Thyroid gland (tissue), 4 donors: ENCODE measurements at regions of chr17 and their contacts with region 1.

Region 1: DNA sequence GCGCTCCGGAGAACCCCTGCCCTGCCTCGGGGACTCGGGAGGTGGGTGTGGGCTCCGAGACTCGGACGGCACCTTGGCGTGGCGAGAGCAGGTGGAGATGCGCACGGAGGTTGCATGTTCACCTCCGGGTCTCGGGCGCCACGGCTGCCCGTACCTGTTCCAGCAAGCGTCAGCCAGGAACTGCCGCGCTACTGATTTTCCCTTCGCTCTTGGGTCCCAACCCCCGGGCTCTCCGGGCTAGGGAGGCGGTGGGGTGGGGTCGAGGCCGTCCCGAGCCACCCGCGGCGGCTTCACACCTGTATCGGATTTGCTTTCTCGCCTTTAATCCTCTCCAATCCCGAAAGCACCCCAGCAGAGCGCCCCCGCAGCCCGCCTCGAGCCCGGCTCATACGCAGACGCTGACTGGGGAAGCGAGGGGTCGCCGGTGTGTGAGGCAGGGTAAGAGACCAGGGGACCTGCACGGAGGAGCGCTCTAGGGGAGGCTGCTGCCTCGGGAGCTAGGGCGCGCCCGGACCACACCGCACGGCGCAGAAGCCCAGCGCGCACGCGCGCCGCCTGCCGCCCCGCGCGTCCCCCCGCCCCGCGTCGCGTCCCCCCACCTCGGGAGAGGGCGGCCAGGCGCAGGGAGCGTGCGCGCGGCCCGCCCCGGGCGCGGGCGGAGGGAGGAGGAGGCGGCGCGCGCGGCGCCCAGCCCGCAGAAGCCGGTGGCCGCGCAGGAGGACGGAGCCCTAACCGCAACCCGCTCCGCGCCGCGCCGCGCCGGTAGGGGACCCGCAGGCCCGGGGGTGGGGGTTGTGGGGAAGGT is at the start of gene DUSP14:
- DNase-seq: peak; percentile 83 to 85
- H3K4me3 ChIP-seq: peak within 1 kb of the TSS; percentile 79 to 85 (median 81)
- H3K27ac ChIP-seq: peak within 1 kb of the TSS; percentile 97 to 99 (median 98)
- H3K4me1 ChIP-seq: peaks cover 38 to 41% of the 10 kb centered on the region in 2 donors
- H3K27me3 ChIP-seq: no peaks in the 10 kb centered on the region
- CTCF ChIP-seq: peak in 1 of 6 experiments; percentile 10
- POLR2A ChIP-seq: peak; percentile 65 to 92
- total RNA-seq, gene DUSP14: 52.7 to 74.5 (median 59.0) TPM

Region 2: GRCh38 chr17:37406635-37407461 is 82.6 kb before region 1 on chr17 and contains the starts of genes ACACA and TADA2A:
- intact Hi-C with region 1: loop called (anchors 5 kb)
- DNase-seq: peak; percentile 80 to 82
- H3K4me3 ChIP-seq: peak within 1 kb of the TSS; percentile 61 to 73 (median 64)
- H3K27ac ChIP-seq: peak within 1 kb of the TSS; percentile 81 to 91 (median 87)
- H3K4me1 ChIP-seq: peaks cover 13 to 22% of the 10 kb centered on the region in 2 donors
- H3K27me3 ChIP-seq: no peaks in the 10 kb centered on the region
- CTCF ChIP-seq: peak in 1 of 6 experiments; percentile 25
- POLR2A ChIP-seq: peak; percentile 14 to 63
- total RNA-seq, gene ACACA: 27.2 to 55.7 (median 38.4) TPM
- total RNA-seq, gene TADA2A: 19.3 to 33.2 (median 22.1) TPM

Region 3: DNA sequence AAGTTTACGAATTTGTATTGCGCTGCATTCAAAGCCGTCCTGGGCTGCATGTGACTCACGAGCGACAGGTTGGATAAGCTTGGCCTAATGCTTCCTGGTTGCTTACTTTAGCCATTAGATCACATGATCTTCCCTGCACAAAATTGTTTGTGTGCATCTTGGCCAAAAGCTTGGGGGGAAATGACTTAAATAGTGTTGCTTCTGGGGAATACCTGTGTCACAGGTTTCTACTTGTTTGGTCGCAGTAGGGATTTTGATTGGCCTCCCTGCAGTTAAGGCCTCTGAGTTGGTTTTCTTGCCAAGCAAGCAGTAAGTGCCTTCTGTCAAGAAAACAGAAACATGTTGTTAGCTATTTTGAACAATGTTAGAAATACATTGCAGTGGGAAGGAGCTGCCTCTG is 39.3 kb before region 1 on chr17:
- intact Hi-C with region 1: loop called (anchors 5 kb)
- DNase-seq: peak; percentile 66 to 69
- H3K4me3 ChIP-seq: no peak overlapping the region
- H3K27ac ChIP-seq: peak overlapping the region; percentile 92 to 97 (median 93)
- H3K4me1 ChIP-seq: peaks cover 63 to 73% of the 10 kb centered on the region in 2 donors
- H3K27me3 ChIP-seq: no peaks in the 10 kb centered on the region
- CTCF ChIP-seq: no peak
- POLR2A ChIP-seq: peak in 1 of 2 donors; percentile 78

Region 4: GRCh38 chr17:37562016-37562745 is 72.8 kb after region 1 on chr17:
- intact Hi-C with region 1: no loop called
- DNase-seq: no peak
- H3K4me3 ChIP-seq: no peak overlapping the region
- H3K27ac ChIP-seq: no peak overlapping the region
- H3K4me1 ChIP-seq: no peaks in the 10 kb centered on the region
- H3K27me3 ChIP-seq: no peaks in the 10 kb centered on the region
- CTCF ChIP-seq: no peak
- POLR2A ChIP-seq: no peak